HEK293T (cell line): ENCODE measurements at regions of chr15 and their contacts with region 1.

Region 1: GRCh38 chr15:53059273-53060043 is 269.3 kb upstream of the ONECUT1 start:
- DNase-seq: no peak

Region 2: DNA sequence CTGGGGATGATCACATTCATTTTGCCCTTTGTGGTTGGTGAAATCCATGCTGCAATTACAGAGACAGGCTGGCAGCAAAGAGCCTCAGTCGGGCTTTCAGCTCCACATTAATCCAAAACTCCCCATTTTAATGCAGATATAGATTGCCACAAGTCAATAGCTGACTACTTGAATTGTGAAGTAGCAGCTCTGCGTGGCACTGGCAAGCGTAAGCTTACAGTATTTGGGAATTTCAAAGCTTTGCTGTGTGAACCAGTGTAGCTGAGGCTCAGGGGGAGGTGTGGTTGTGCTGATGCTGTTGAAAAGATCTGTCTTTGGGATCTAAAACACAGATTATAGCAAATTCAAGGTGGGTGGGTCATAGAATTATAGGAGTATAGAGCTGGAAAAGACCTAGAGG is 21.0 kb after region 1 on chr15:
- CTCF ChIA-PET with region 1: interaction called, 11 read pairs
- POLR2A ChIA-PET with region 1: no interaction called
- DNase-seq: no peak